ENCODE measurements at regions of chr1 and their contacts with region 1.

Region 1: DNA sequence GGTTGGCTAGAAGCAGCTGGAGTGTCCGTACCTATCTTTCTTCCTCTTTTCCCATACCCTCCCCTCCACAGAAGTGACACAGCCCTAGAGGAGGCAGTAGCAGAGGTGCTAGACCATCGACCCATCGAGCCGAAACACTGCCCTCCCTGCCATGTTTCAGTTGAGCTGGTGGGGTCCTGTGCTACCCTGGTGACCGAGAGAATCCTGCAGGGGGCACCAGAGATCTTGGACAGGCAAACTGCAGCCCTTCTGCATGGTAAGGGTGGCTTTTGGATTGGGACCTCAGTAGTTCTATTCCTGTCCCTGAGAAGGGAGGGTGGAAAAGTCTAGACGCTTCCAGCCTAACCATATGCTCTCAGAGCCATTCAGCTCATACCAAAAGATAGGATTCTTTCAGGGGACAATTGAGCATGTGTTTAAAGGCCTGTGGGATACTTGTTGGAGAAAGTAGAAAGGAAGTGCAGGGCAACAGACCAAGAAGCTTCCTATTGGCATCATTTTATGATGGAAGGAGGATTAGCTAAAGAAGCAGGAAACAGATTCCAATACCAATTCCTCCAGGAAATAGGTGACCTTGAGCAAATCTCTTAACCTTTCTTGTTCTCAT is 11.7 kb upstream of the BNIPL start:
- DNase-seq: peak; percentile 77 to 89
- ATAC-seq: peak; percentile 83 to 96 (median 86)
- H3K4me3 ChIP-seq: no peak overlapping the region
- H3K27ac ChIP-seq: peak overlapping the region; percentile 92
- H3K4me1 ChIP-seq: peaks cover 30% of the 10 kb centered on the region
- H3K27me3 ChIP-seq: no peaks in the 10 kb centered on the region
- CTCF ChIP-seq: peak; percentile 73

Region 2: GRCh38 chr1:150876119-150876454 is 148.6 kb before region 1 on chr1:
- intact Hi-C with region 1: no loop called
- DNase-seq: no peak
- ATAC-seq: peak; percentile 61 to 73 (median 68)
- H3K4me3 ChIP-seq: peak overlapping the region; percentile 86
- H3K27ac ChIP-seq: peak overlapping the region; percentile 94
- H3K4me1 ChIP-seq: peaks cover 12% of the 10 kb centered on the region
- H3K27me3 ChIP-seq: no peaks in the 10 kb centered on the region
- CTCF ChIP-seq: no peak

Region 3: DNA sequence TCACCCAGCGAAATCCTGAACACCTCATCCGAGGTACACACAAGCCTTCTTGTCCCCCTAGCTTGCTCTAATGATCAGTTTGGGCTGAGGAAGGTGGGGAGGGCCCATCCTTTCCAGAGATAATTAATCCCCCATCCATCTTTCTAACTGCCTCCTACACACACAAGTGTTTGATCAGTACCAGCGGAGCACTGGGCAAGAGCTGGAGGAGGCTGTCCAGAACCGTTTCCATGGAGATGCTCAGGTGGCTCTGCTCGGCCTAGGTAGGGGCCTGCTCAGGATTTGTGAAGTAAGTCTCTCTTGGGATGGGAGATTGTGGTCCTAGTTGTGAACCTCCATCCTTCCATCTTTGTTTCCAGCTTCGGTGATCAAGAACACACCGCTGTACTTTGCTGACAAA is 36.7 kb before region 1 on chr1:
- intact Hi-C with region 1: no loop called
- DNase-seq: no peak
- ATAC-seq: no peak
- H3K4me3 ChIP-seq: no peak overlapping the region
- H3K27ac ChIP-seq: no peak overlapping the region
- H3K4me1 ChIP-seq: no peaks in the 10 kb centered on the region
- H3K27me3 ChIP-seq: no peaks in the 10 kb centered on the region
- CTCF ChIP-seq: no peak

Region 4: DNA sequence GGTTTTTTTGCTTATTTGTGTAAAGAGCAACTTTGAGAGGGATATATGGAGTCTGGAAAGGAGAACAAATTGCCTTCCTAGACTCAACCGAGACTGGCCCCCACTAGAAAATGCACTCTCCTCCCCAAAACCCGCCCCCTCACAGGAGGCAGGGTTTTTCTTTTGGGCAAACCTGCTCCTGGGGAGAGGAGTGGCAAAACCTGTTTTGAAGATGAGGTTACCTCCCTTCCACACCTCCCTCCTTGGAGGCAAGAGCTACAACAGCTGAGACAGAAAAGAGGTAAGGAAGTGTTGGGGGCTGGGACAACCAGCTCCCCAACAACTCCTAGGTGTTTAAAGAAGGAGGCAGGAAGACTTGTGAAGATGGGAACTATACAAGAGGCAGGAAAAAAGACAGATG is 11.7 kb after region 1 on chr1 and contains the start of gene BNIPL:
- intact Hi-C with region 1: no loop called
- DNase-seq: no peak
- ATAC-seq: no peak
- H3K4me3 ChIP-seq: no peak within 1 kb of the TSS
- H3K27ac ChIP-seq: no peak within 1 kb of the TSS
- H3K4me1 ChIP-seq: no peaks in the 10 kb centered on the region
- H3K27me3 ChIP-seq: no peaks in the 10 kb centered on the region
- CTCF ChIP-seq: no peak
- total RNA-seq, gene BNIPL: 0.06 to 0.96 (median 0.43) TPM

Region 5: GRCh38 chr1:151059078-151059907 is 34.6 kb after region 1 on chr1 and contains the start of gene CDC42SE1:
- intact Hi-C with region 1: loop called (anchors 5 kb)
- DNase-seq: peak; percentile 85 to 92
- ATAC-seq: peak; percentile 94 to 97 (median 95)
- H3K4me3 ChIP-seq: peak within 1 kb of the TSS; percentile 83
- H3K27ac ChIP-seq: peak within 1 kb of the TSS; percentile 90
- H3K4me1 ChIP-seq: peaks cover 31% of the 10 kb centered on the region
- H3K27me3 ChIP-seq: no peaks in the 10 kb centered on the region
- CTCF ChIP-seq: peak; percentile 81
- total RNA-seq, gene CDC42SE1: 26.1 to 49.8 (median 33.2) TPM

Region 6: DNA sequence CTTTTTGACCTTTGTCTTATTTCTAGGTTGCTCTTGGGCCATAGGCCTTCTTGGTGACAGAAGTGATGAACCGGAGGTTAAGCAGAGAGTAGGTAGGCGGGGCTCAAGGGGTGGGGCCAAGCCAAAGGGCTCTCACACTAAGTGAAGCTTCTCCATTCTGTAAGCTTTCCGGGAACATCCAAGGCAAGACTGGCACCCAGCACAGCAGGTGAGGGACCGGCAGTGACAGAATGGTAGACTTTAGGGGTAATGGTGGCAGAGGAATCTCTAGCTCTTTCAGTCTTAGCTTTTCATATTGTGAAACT is 131.8 kb after region 1 on chr1 and contains the start of gene TNFAIP8L2:
- intact Hi-C with region 1: loop called (anchors 5 kb)
- DNase-seq: peak in 1 of 2 donors; percentile 75
- ATAC-seq: peak in 2 of 4 donors; percentile 26 to 33
- H3K4me3 ChIP-seq: peak within 1 kb of the TSS; percentile 37
- H3K27ac ChIP-seq: peak within 1 kb of the TSS; percentile 43
- H3K4me1 ChIP-seq: no peaks in the 10 kb centered on the region
- H3K27me3 ChIP-seq: no peaks in the 10 kb centered on the region
- CTCF ChIP-seq: no peak
- total RNA-seq, gene TNFAIP8L2: 0.56 to 1.3 (median 0.74) TPM